Activated B cell treated with CpG ODN at 0.5 μM for 24 hours (primary cell): ENCODE measurements at regions of chr1 and their contacts with region 1.

Region 1: GRCh38 chr1:24735509-24736375 is 9.5 kb upstream of the CLIC4 start:
- DNase-seq: no peak
- ATAC-seq: no peak
- H3K4me3 Mint-ChIP-seq: peak overlapping the region; percentile 6
- H3K27ac Mint-ChIP-seq: peak overlapping the region; percentile 71
- H3K4me1 Mint-ChIP-seq: peaks cover 59% of the 10 kb centered on the region
- H3K27me3 Mint-ChIP-seq: no peaks in the 10 kb centered on the region
- CTCF ChIP-seq: no peak

Region 2: GRCh38 chr1:24694380-24694843 is 41.3 kb before region 1 on chr1:
- CTCF ChIA-PET with region 1: interaction called, 22 read pairs
- POLR2A ChIA-PET with region 1: interaction called, 14 read pairs
- intact Hi-C with region 1: no loop called
- DNase-seq: no peak
- ATAC-seq: peak; percentile 53
- H3K4me3 Mint-ChIP-seq: peak overlapping the region; percentile 45
- H3K27ac Mint-ChIP-seq: peak overlapping the region; percentile 76
- H3K4me1 Mint-ChIP-seq: peaks cover 35% of the 10 kb centered on the region
- H3K27me3 Mint-ChIP-seq: no peaks in the 10 kb centered on the region
- CTCF ChIP-seq: no peak